Dendritic cell treated with granulocyte-macrophage colony-stimulating factor and Interleukin-4, amounts not matched to agents 40 ng/mL and 50 ng/mL, for 4 days (primary cell): ENCODE measurements at regions of chr15 and their contacts with region 1.

Region 1: GRCh38 chr15:39376371-39376909 is 204.4 kb upstream of the THBS1 start:
- H3K4me3 Mint-ChIP-seq: no peak overlapping the region
- H3K27ac Mint-ChIP-seq: no peak overlapping the region
- H3K4me1 Mint-ChIP-seq: peaks cover 27% of the 10 kb centered on the region
- H3K27me3 Mint-ChIP-seq: no peaks in the 10 kb centered on the region

Region 2: DNA sequence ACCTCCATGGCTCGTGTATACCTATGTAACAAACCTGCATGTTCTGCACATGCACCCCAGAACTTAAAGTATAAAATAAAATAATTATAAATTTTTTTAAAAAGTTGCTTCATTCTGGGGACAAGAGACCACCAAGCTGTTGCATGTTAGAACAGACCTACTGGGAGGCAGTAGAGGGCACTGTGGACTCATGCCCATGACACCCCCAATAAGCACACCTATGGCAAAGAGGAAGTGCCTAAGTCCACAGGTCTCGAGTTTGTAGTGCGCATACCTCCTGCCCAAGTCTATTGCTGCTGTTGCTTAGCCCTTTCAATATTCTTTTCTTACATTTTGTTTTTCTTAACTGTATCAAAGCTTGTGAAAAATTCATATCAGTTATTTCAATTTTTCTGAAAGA is 63.5 kb before region 1 on chr15:
- intact Hi-C with region 1: no loop called
- H3K4me3 Mint-ChIP-seq: no peak overlapping the region
- H3K27ac Mint-ChIP-seq: no peak overlapping the region
- H3K4me1 Mint-ChIP-seq: peaks cover 6% of the 10 kb centered on the region
- H3K27me3 Mint-ChIP-seq: peaks cover 1% of the 10 kb centered on the region

Region 3: DNA sequence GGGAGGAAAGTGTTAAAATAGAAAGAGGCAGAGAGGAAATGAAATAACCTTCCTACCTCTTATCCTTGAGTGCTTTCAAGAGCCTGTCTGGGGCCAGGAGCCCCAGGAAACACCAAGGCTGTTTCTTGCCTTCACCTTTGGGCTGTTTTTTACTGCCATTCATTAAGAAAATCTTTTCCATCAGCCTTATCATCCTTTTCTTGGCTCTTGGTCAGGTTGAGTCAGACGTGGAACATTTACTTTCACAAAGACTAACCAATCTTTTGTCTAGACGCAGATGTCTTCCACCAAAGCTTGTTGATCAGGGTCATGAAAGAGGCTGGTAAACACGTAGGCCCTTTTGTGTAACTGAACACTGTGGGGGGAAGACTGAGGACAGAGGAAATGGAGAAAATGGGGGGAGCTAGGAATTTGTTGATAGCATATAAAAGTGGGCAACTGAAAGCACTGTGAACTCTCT is 53.5 kb after region 1 on chr15:
- intact Hi-C with region 1: loop called (anchors 10 kb)
- H3K4me3 Mint-ChIP-seq: no peak overlapping the region
- H3K27ac Mint-ChIP-seq: no peak overlapping the region
- H3K4me1 Mint-ChIP-seq: peaks cover 66% of the 10 kb centered on the region
- H3K27me3 Mint-ChIP-seq: no peaks in the 10 kb centered on the region

Region 4: GRCh38 chr15:39770748-39771689 is 394.6 kb after region 1 on chr15:
- intact Hi-C with region 1: no loop called
- H3K4me3 Mint-ChIP-seq: no peak overlapping the region
- H3K27ac Mint-ChIP-seq: no peak overlapping the region
- H3K4me1 Mint-ChIP-seq: peaks cover 19% of the 10 kb centered on the region
- H3K27me3 Mint-ChIP-seq: no peaks in the 10 kb centered on the region